ENCODE measurements at regions of chr3 and their contacts with region 1.

Region 1: GRCh38 chr3:164641071-164641470 is 437.2 kb downstream of the SI start:
- DNase-seq: no peak
- ATAC-seq: no peak
- H3K4me3 ChIP-seq: no peak overlapping the region
- H3K27ac ChIP-seq: no peak overlapping the region
- H3K4me1 ChIP-seq: no peaks in the 10 kb centered on the region
- H3K27me3 ChIP-seq: no peaks in the 10 kb centered on the region
- CTCF ChIP-seq: no peak

Region 2: DNA sequence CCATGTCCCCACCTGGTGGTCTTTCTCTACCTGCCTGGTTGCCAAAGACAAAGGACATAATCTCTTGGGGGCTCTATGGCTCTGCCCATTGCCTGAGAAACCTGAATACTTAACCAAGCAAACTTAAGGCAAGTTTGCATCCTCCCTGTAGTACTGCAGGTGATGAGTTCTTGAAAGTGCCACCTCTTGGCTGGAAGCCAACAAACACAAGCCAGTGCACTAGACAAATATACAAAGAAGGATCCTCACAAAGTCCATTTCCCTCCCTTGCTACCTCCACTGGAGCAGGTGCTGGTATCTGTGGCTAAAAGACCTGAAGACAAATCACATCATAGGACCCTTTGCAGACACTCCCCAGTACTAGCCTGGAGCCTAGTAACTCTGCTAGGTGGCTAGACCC is 335.0 kb before region 1 on chr3:
- CTCF ChIA-PET with region 1: no interaction called
- POLR2A ChIA-PET with region 1: no interaction called
- in situ Hi-C with region 1: no loop called
- intact Hi-C with region 1: no loop called
- DNase-seq: no peak
- ATAC-seq: no peak
- H3K4me3 ChIP-seq: no peak overlapping the region
- H3K27ac ChIP-seq: no peak overlapping the region
- H3K4me1 ChIP-seq: no peaks in the 10 kb centered on the region
- H3K27me3 ChIP-seq: no peaks in the 10 kb centered on the region
- CTCF ChIP-seq: no peak

Region 3: DNA sequence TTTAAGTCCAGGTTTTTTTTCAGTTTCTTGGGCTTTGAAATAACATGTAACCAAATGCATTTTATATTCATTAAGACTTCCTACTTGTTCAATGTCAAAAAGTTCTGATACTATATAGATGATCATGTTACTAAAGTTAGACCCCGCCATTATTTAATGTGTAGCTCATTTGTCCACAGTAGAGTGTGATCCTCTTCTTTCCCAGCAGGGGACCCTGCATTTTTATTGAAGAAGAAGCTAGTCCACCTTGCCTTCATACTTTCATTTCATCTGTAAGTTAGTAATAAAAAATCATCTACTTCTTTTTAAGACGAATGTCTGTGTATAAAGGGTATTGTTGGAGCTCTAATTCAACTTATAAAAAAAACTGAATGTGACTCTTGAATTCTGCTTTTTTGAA is 32.7 kb after region 1 on chr3:
- CTCF ChIA-PET with region 1: no interaction called
- POLR2A ChIA-PET with region 1: no interaction called
- in situ Hi-C with region 1: no loop called
- intact Hi-C with region 1: no loop called
- DNase-seq: no peak
- ATAC-seq: no peak
- H3K4me3 ChIP-seq: no peak overlapping the region
- H3K27ac ChIP-seq: no peak overlapping the region
- H3K4me1 ChIP-seq: no peaks in the 10 kb centered on the region
- H3K27me3 ChIP-seq: no peaks in the 10 kb centered on the region
- CTCF ChIP-seq: no peak; the same call in 1 of the 2 replicates

Region 4: GRCh38 chr3:164730815-164731360 is 89.8 kb after region 1 on chr3:
- CTCF ChIA-PET with region 1: no interaction called
- POLR2A ChIA-PET with region 1: no interaction called
- in situ Hi-C with region 1: no loop called
- intact Hi-C with region 1: no loop called
- DNase-seq: no peak
- ATAC-seq: no peak
- H3K4me3 ChIP-seq: no peak overlapping the region
- H3K27ac ChIP-seq: no peak overlapping the region
- H3K4me1 ChIP-seq: no peaks in the 10 kb centered on the region
- H3K27me3 ChIP-seq: no peaks in the 10 kb centered on the region
- CTCF ChIP-seq: no peak

Region 5: DNA sequence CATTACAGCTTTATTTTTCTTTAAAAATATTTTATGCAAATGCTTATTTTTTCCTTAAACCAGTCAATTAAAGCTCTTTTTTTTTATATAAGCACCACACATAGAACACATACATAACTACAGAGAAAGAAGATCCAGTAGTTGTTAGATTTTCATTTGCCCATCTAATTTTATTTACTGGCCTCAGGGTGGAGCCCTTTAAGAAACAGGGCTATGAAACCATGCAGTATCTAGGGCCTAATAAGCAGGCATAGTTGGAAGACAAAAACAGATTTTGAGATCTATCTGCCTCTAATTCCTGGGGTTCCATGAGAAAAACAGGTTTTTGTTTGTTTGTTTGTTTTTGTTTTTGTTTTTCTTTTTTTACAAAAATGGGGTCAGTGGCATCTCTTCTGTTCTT is 1075.5 kb after region 1 on chr3:
- CTCF ChIA-PET with region 1: no interaction called
- POLR2A ChIA-PET with region 1: interaction called, 13 read pairs
- in situ Hi-C with region 1: no loop called
- intact Hi-C with region 1: no loop called
- DNase-seq: no peak
- ATAC-seq: no peak
- H3K4me3 ChIP-seq: no peak overlapping the region
- H3K27ac ChIP-seq: no peak overlapping the region
- H3K4me1 ChIP-seq: no peaks in the 10 kb centered on the region
- H3K27me3 ChIP-seq: no peaks in the 10 kb centered on the region
- CTCF ChIP-seq: no peak

Measured in Panc1 (cell line).